Transverse colon (tissue), 4 donors: ENCODE measurements at regions of chr4 and their contacts with region 1.

Region 1: DNA sequence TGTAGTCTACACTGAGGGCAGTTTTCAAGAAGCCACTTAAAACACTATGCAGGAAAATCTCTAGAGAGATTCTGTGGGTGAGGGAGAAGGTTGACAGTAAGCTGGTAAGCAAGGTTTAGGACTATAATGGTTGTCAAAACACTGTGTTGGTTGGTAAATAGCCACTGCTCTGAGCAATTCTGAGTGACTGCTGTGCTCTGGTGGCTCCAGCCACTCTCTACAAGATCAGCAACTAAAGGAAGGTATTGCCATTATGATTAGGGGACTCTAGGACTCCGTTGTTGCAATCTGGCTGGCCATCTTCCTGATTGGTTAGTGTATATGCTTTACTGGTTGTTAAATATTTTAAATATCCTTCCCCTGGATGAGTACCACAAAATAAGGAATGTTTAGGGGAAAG is 5.5 kb upstream of the FAM47E start:
- DNase-seq: no peak
- H3K4me3 ChIP-seq: no peak overlapping the region
- H3K27ac ChIP-seq: no peak overlapping the region
- H3K4me1 ChIP-seq: peaks cover 3 to 5% (median 4%) of the 10 kb centered on the region in 4 donors
- H3K27me3 ChIP-seq: no peaks in the 10 kb centered on the region
- CTCF ChIP-seq: no peak
- EP300 ChIP-seq: no peak
- POLR2A ChIP-seq: no peak

Region 2: DNA sequence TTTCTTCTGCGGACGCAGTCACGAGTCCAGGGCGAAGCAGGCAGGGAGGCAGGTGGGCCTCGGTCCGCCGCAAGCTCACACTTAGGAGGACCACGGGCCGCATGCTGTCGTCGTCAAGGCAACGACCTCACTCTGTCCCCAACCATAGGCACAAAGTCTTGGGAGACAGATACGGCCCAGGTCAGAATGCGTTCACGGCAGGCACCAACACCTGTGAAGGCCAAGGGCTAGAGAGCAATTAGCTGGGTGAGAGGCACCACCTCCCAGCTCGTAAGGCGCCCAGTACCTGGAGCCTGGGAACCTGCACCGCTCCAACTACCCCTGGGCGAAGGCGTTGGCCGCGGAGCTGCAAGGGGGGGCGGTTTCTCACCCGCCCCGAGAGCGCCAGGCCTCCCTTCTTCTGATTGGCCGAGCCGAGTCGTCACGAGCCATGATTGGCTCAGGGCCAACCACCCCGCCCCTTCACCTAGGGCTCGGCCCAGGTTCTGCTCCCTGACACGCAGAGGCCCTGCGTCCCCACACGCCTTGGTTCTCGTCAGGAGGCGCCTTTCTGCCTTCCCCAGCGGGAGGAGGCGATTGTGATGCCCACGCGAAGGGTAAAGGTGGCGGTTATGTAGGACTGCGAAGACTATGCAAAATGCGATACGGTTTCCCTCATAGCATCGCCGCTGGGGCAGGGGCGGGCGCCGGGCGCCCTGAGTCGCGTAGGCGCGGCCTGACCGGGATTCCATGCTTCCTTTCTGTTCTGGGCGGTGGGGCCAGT is 615.7 kb before region 1 on chr4 and contains the start of gene CDKL2:
- in situ Hi-C with region 1: no loop called
- intact Hi-C with region 1: no loop called
- DNase-seq: peak; percentile 96
- H3K4me3 ChIP-seq: peak within 1 kb of the TSS; percentile 35 to 65 (median 46)
- H3K27ac ChIP-seq: peak within 1 kb of the TSS; percentile 33 to 76 (median 67)
- H3K4me1 ChIP-seq: peaks cover 0 to 6% (median 2%) of the 10 kb centered on the region in 4 donors
- H3K27me3 ChIP-seq: no peaks in the 10 kb centered on the region
- CTCF ChIP-seq: no peak
- EP300 ChIP-seq: no peak
- POLR2A ChIP-seq: peak; percentile 69
- total RNA-seq, gene CDKL2: 0.79 to 7.6 (median 1.2) TPM in 3 of 4 donors, not detected in the other

Region 3: DNA sequence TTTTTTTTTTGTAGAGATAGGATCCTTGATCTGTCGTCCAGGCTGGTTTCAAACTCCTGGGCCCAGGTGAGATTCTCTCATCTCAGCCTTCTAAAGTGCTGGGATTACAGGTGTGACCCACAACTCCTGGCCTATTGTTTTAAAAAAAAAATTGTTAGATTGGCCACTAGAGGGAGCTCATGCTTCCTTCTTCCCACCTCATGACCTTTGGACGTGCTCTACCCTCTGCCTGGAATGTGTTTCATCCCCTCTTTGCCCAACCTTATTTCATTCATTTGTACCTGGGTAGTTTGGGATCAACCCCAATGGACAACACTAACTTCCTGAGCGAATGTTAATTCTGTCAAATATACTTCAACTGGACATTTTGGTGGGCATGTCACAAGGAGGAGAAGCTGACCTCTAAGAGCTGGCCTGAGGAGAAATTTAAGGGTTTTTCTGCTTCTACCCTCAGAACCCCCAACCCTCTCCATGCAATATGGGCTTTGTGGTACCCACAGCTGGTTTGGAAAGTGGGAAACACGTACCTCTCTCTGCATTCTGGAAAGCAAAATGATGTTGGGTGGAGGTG is 350.2 kb before region 1 on chr4:
- in situ Hi-C with region 1: no loop called
- intact Hi-C with region 1: no loop called
- DNase-seq: no peak
- H3K4me3 ChIP-seq: no peak overlapping the region
- H3K27ac ChIP-seq: no peak overlapping the region
- H3K4me1 ChIP-seq: no peaks in the 10 kb centered on the region
- H3K27me3 ChIP-seq: no peaks in the 10 kb centered on the region
- CTCF ChIP-seq: peak; percentile 59 to 69 (median 65)
- EP300 ChIP-seq: no peak
- POLR2A ChIP-seq: no peak

Region 4: GRCh38 chr4:76257824-76258223 is 11.8 kb after region 1 on chr4:
- in situ Hi-C with region 1: no loop called
- intact Hi-C with region 1: loop called (anchors 1 kb)
- DNase-seq: no peak
- H3K4me3 ChIP-seq: no peak overlapping the region
- H3K27ac ChIP-seq: no peak overlapping the region
- H3K4me1 ChIP-seq: no peaks in the 10 kb centered on the region
- H3K27me3 ChIP-seq: no peaks in the 10 kb centered on the region
- CTCF ChIP-seq: no peak
- EP300 ChIP-seq: no peak
- POLR2A ChIP-seq: no peak

Region 5: DNA sequence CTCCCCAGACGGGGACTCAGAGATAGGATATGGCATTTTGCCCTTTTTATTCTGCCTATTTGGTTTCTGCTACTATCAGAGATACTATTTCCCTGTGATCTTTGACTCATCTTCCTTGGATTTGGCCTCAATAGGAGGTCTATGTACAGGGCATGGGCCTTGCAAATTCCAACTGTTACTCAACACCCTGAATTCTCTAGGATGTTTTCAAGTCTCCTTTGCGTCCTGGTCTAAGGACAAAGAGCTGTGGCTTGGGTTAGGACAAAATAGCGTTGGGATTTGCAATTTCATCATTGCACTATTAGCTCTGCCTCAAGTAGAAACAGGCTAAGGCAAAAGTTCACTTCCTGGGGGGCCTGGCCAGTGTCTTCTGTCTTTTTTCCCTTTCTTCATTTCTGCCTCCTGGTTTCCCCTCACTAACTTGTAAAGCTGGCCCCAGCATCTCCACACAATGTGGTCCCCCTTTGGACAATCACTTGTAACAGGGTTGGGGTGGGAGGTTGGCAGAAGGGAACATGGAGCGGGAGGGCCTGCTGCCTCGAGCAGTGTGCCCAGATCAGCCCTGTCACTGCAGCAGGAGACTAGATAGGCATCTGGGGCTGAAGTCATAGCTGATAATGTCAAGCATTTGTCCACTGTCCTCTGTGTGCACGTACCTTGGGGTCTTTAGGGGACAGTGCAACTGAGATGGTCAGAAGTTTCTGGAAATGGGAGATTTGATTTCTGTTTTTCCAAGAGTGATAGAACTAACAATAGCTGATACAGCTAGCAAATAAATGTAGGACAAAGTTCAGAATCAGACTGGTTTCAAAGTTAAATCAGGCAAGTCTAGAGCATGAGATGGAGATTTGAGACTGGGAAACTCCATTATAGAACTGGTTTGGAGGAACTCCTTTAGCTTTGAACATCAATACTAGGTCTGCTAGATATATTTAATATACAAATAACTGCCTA is 34.7 kb after region 1 on chr4:
- in situ Hi-C with region 1: no loop called
- intact Hi-C with region 1: loop called (anchors 2 kb)
- DNase-seq: no peak
- H3K4me3 ChIP-seq: no peak overlapping the region
- H3K27ac ChIP-seq: no peak overlapping the region
- H3K4me1 ChIP-seq: peaks cover 0 to 37% (median 10%) of the 10 kb centered on the region in 4 donors
- H3K27me3 ChIP-seq: no peaks in the 10 kb centered on the region
- CTCF ChIP-seq: no peak
- EP300 ChIP-seq: no peak
- POLR2A ChIP-seq: no peak